A673 (cell line): ENCODE measurements at regions of chrX and their contacts with region 1.

Region 1: GRCh38 chrX:46929439-46930261 is 17.4 kb downstream of the JADE3 start:
- DNase-seq: no peak
- H3K4me3 ChIP-seq: no peak overlapping the region
- H3K27ac ChIP-seq: no peak overlapping the region
- H3K4me1 ChIP-seq: peaks cover 7% of the 10 kb centered on the region
- H3K27me3 ChIP-seq: no peaks in the 10 kb centered on the region
- CTCF ChIP-seq: no peak

Region 2: GRCh38 chrX:46662594-46662993 is 267.1 kb before region 1 on chrX:
- CTCF ChIA-PET with region 1: no interaction called
- POLR2A ChIA-PET with region 1: no interaction called
- intact Hi-C with region 1: no loop called
- DNase-seq: no peak
- H3K4me3 ChIP-seq: no peak overlapping the region
- H3K27ac ChIP-seq: no peak overlapping the region
- H3K4me1 ChIP-seq: no peaks in the 10 kb centered on the region
- H3K27me3 ChIP-seq: no peaks in the 10 kb centered on the region
- CTCF ChIP-seq: no peak

Region 3: DNA sequence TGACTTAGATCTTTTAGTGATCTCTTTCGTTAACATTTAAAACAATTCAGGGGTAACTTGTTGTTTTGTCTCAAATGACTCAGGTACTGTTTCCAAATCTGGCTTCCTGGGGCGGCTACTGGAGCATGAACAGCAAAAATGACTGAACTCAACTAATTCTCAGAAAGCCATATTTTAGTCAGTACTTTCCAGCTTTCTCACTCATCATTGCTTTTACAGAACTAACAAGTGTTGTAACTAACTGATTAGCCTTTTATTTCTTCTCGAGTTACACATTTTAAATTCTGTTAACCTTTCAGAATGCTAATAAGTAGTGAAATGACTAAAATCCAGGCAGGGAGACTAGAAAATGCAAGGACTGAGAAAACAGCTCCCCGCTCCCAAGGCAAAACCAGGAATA is 37.9 kb after region 1 on chrX:
- CTCF ChIA-PET with region 1: no interaction called
- POLR2A ChIA-PET with region 1: no interaction called
- intact Hi-C with region 1: loop called (anchors 1 kb)
- DNase-seq: no peak
- H3K4me3 ChIP-seq: no peak overlapping the region
- H3K27ac ChIP-seq: no peak overlapping the region
- H3K4me1 ChIP-seq: peaks cover 44% of the 10 kb centered on the region
- H3K27me3 ChIP-seq: no peaks in the 10 kb centered on the region
- CTCF ChIP-seq: no peak

Region 4: DNA sequence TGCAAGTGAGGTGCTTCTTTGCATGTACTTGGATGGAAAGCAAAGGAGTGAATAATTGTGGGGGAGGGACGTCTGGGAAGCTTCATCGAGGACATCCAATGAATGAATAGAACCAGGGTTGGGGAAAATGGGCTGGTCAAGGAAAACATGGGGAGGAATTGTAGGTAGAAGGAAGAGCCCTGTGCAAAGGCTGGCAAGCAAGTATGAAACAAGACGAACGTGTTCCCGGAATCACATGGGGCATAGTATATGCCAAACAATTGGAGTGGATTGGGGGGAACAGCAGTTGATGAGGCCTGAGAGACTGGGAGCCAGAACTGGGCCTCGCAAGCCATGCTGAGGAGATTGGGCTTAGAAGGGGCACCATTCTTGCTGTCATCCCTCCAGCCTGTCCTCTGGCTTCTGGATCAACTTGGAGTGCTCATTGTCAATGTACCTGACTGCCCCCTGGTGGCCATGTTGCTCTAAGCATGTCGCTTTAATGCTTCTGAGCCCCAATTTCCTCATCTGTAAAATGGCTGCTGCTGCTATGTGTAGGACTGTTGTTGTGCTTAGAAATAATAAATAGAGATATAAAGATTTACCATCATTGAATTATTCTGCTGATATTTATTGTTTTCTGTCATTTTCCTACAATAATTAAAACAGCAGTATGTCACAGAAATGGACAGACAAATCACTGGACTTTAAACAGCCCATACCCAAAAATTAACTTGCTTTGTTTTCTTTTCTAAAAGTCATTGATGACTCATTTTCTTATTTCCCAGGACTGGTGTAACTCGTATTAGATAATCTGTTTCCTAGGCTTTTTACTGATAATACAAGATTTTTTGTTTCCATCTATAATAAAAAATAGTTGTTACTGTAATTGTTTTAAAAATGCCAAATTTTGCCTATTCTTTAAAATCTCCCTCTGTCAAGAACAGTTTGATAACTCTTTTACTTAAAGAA is 49.0 kb after region 1 on chrX:
- CTCF ChIA-PET with region 1: no interaction called
- POLR2A ChIA-PET with region 1: no interaction called
- intact Hi-C with region 1: no loop called
- DNase-seq: peak; percentile 87
- H3K4me3 ChIP-seq: no peak overlapping the region
- H3K27ac ChIP-seq: peak overlapping the region; percentile 59
- H3K4me1 ChIP-seq: peaks cover 18% of the 10 kb centered on the region
- H3K27me3 ChIP-seq: no peaks in the 10 kb centered on the region
- CTCF ChIP-seq: peak; percentile 84

Region 5: GRCh38 chrX:47059142-47059874 is 129.7 kb after region 1 on chrX:
- CTCF ChIA-PET with region 1: no interaction called
- POLR2A ChIA-PET with region 1: no interaction called
- intact Hi-C with region 1: no loop called
- DNase-seq: no peak
- H3K4me3 ChIP-seq: no peak overlapping the region
- H3K27ac ChIP-seq: no peak overlapping the region
- H3K4me1 ChIP-seq: no peaks in the 10 kb centered on the region
- H3K27me3 ChIP-seq: peaks cover 4% of the 10 kb centered on the region
- CTCF ChIP-seq: no peak